Breast epithelium (tissue), 4 donors: ENCODE measurements at regions of chr9 and their contacts with region 1.

Region 1: GRCh38 chr9:96009690-96010472 is 134.4 kb downstream of the ERCC6L2 start:
- DNase-seq: no peak
- H3K4me3 ChIP-seq: no peak overlapping the region
- H3K27ac ChIP-seq: no peak overlapping the region
- H3K4me1 ChIP-seq: no peaks in the 10 kb centered on the region
- H3K27me3 ChIP-seq: no peaks in the 10 kb centered on the region
- CTCF ChIP-seq: no peak
- POLR2A ChIP-seq: no peak

Region 2: GRCh38 chr9:95447660-95448420 is 562.0 kb before region 1 on chr9:
- intact Hi-C with region 1: no loop called
- DNase-seq: no peak
- H3K4me3 ChIP-seq: no peak overlapping the region
- H3K27ac ChIP-seq: no peak overlapping the region
- H3K4me1 ChIP-seq: no peaks in the 10 kb centered on the region
- H3K27me3 ChIP-seq: no peaks in the 10 kb centered on the region
- CTCF ChIP-seq: no peak
- POLR2A ChIP-seq: no peak

Region 3: GRCh38 chr9:95494416-95495371 is 515.2 kb before region 1 on chr9:
- intact Hi-C with region 1: no loop called
- DNase-seq: no peak
- H3K4me3 ChIP-seq: no peak overlapping the region
- H3K27ac ChIP-seq: no peak overlapping the region
- H3K4me1 ChIP-seq: no peaks in the 10 kb centered on the region
- H3K27me3 ChIP-seq: no peaks in the 10 kb centered on the region
- CTCF ChIP-seq: no peak
- POLR2A ChIP-seq: no peak

Region 4: GRCh38 chr9:95937131-95937530 is 72.8 kb before region 1 on chr9:
- intact Hi-C with region 1: loop called (anchors 2 kb)
- DNase-seq: no peak
- H3K4me3 ChIP-seq: no peak overlapping the region
- H3K27ac ChIP-seq: no peak overlapping the region
- H3K4me1 ChIP-seq: no peaks in the 10 kb centered on the region
- H3K27me3 ChIP-seq: no peaks in the 10 kb centered on the region
- CTCF ChIP-seq: no peak
- POLR2A ChIP-seq: no peak